Right ventricle myocardium superior (tissue), 1 donor: ENCODE measurements at regions of chr14 and their contacts with region 1.

Region 1: DNA sequence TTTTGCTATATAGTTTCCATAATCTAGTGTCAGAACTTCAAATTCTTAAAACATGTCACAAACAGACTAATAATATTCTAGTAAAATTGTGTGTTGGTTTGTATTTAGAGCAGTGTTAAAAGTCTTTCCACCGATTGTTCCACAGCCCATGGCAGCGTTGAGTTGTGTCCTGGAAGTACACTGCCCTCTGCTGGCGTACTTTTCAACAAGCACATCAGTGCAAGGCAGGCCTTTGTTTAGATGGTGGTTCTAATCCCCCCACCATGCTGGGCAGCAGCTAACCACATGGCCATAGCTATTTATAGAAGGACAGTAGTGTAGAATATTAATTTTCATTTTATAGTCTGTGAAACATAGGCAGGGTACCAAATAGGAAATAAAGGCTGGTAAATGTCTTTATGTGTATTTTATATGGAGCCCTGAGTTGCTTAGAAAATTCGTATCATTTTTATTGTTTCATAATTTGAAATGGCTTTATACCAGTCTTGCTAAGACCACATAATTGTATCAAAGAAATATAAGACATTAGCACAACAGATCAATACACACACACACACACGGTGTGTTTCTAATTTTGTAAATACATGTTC is 235.4 kb downstream of the SEC23A start:
- DNase-seq: peak; percentile 44
- ATAC-seq: peak; percentile 92

Region 2: DNA sequence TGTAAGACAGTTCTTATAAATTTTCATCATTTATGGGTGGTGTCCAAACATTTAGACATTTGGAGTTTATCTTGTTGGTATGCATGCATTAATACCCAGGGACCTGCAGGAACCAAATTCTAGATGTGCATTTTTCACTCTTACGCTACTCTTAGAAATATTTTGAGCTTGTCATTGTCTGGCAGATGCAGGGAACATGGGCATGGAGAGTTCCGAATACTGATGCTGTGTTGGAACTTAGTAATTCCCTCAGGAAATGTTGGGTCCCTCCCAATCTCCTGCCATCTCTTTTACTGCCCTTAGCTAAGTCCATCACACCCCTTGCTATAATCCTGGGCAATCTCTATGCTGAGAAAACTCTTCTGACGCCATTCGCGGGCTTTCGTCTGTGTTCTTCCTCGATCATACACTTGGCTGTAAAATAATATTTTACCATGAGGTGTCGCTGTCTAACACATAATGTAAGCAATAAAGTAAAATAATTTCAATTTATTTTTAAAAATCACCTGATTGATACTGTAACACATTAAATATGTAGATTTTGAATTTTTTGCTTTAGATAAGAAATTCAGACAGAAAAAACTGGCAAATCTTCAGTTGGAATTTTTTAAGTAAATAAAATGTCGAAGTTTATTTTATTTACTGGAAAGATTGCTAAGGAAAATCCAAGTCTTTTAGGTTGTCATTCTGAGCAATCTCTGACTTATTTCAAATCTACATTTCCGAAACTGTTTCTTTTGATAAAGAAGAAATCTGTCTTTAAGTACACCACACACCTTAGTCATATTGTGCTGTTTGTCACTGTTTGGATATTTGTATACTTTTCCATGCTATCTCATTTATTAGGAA is 964.1 kb before region 1 on chr14:
- intact Hi-C with region 1: loop called (anchors 10 kb)
- DNase-seq: no peak
- ATAC-seq: peak; percentile 58

Region 3: GRCh38 chr14:37985826-37986470 is 881.7 kb before region 1 on chr14:
- intact Hi-C with region 1: loop called (anchors 10 kb)
- DNase-seq: no peak
- ATAC-seq: no peak

Region 4: DNA sequence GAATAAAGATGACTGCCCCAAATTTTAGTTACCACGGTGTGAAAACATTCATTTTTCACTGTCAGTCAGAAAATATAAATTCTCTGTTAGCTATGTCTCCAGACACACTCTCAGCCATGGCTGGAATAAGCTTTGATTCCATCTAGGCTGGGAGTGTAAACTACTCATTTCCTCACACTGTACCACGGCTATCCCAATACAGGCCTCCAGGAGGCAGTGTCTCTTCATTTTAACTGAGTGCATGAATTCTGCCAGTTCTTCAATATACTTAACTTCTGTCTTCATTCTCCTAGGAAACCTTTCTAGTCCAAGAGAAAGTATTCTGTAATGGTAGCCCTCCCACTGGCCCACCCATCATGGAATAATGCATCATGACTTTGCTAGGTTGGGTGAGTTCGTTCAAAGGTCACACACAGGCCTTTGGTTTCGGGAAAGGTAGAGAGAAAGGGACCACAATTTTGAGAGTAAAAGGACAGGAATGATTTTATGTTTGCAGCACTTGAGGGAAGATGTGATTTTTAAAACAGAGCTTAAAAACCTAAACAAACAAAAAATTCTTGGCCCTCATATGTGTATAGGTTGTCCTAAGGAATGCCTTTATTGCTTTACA is 145.7 kb before region 1 on chr14:
- intact Hi-C with region 1: loop called (anchors 10 kb)
- DNase-seq: peak; percentile 48
- ATAC-seq: peak; percentile 67